ENCODE measurements at regions of chr14 and their contacts with region 1.

Region 1: DNA sequence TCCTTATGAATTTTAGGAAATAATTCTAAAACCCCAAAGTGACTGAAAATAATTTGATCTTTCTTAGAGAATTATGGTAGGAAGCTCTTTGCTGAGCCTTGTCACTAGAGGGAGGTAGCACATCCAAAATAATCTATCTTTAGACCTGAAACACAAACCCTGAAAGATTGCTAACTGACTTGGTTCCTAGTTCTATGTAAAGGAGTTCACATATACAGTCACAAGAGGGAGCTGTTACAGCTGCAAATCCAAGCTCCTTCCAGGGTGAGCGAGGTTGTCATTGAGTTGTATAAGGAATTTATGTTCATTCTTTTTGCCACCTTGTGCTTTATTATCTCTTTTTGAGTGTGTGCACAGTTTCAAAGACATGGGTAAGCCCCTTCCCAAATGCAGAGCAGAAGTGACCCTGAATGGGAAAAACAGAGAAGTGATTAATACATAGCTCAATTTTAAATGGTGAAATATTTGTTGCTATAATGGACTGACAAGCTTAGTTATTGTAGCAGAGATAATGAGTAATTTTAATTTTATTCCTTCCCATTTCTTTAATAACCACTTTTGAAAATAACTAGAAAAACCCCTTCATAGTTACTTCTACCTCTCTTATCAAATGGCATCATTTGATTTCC is 387.9 kb downstream of the DAD1 start:
- H3K4me3 ChIP-seq: no peak overlapping the region
- H3K27ac ChIP-seq: no peak overlapping the region
- H3K4me1 ChIP-seq: no peaks in the 10 kb centered on the region
- CTCF ChIP-seq: no peak

Region 2: DNA sequence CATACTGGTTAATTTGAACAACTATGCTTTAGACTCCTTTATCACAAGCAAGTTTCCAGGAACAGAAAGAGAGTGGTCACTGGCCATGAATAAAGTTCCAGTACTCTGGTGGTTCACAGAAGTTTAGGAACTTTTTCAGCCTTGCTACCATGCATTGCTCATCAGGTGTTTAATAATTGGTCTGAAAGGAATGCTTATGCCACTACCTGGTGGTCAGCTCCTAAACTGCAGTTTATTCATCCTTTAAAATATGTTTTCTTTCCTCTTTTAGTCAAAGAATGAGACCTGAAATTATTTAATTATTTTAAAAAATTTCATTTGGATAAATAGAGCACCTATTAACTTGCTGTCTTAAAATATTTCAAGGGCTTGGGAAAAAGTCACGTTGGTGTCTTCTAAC is 267.4 kb before region 1 on chr14:
- CTCF ChIA-PET with region 1: no interaction called
- POLR2A ChIA-PET with region 1: no interaction called
- H3K4me3 ChIP-seq: no peak overlapping the region
- H3K27ac ChIP-seq: no peak overlapping the region
- H3K4me1 ChIP-seq: no peaks in the 10 kb centered on the region
- CTCF ChIP-seq: no peak

Region 3: DNA sequence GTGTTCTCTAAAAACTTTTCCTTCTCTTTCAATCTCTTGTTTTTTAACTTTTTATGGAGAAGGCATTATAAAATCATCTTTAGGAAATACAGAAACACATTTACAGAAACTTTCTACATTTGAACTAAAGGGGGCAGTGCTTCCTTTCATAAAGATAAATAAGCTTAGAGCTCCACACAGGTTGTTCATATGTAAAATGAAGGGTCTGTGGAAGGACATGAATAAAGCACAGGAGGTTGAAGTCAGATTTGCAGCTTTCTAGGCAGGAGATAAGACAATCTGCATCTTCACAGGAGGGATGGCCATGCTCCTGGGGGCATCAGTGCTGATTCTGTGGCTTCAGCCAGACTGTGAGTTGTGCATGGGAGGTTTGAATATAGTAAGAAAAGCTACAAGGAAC is 38.0 kb before region 1 on chr14:
- CTCF ChIA-PET with region 1: interaction called, 13 read pairs
- POLR2A ChIA-PET with region 1: no interaction called
- H3K4me3 ChIP-seq: no peak overlapping the region
- H3K27ac ChIP-seq: no peak overlapping the region
- H3K4me1 ChIP-seq: no peaks in the 10 kb centered on the region
- CTCF ChIP-seq: no peak

Region 4: DNA sequence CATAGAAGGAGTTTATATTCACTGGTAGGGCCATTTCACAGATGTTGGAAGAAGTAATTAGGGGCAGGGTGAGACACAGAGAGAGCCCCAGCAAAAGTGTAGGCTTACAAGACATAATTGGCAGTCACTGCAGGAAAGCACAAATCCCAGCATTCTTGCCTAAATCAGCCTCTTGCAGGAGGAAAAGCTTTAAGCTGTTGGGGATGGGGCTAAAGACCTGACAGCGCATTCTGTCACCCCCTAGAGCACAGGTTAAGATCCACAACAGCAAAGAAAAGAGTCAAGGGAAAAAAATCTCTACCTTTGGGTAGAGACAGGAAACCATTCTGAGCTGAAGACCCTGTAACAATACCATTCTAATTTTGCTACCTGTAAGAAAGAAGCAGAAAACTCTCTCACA is 21.0 kb before region 1 on chr14:
- CTCF ChIA-PET with region 1: interaction called, 16 read pairs
- POLR2A ChIA-PET with region 1: no interaction called
- H3K4me3 ChIP-seq: no peak overlapping the region
- H3K27ac ChIP-seq: no peak overlapping the region
- H3K4me1 ChIP-seq: no peaks in the 10 kb centered on the region
- CTCF ChIP-seq: no peak

Region 5: DNA sequence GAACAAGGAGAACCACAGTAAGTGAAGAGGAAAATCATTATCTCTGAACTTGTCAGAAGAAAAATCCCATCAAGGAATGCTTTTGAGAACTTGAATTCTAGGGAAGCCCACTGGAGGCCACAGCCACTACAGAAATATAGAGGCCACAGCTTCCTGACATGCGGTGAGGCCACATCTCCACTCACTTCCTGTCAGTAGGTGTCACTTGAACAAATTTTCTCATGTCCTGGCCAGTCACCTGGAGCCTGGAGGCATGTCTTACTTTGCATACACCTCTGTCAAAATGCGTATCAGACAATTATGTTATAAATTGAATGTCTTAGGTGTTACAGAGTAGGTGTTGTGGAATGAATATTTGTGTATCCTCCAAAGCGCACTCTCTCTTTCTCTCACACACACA is 17.6 kb after region 1 on chr14:
- CTCF ChIA-PET with region 1: interaction called, 26 read pairs
- POLR2A ChIA-PET with region 1: no interaction called
- H3K4me3 ChIP-seq: no peak overlapping the region
- H3K27ac ChIP-seq: no peak overlapping the region
- H3K4me1 ChIP-seq: no peaks in the 10 kb centered on the region
- CTCF ChIP-seq: no peak

Region 6: GRCh38 chr14:22255017-22255950 is 54.2 kb after region 1 on chr14:
- CTCF ChIA-PET with region 1: interaction called, 10 read pairs
- POLR2A ChIA-PET with region 1: no interaction called
- H3K4me3 ChIP-seq: no peak overlapping the region
- H3K27ac ChIP-seq: no peak overlapping the region
- H3K4me1 ChIP-seq: no peaks in the 10 kb centered on the region
- CTCF ChIP-seq: no peak

Region 7: GRCh38 chr14:22291406-22291805 is 90.3 kb after region 1 on chr14:
- CTCF ChIA-PET with region 1: no interaction called
- POLR2A ChIA-PET with region 1: no interaction called
- H3K4me3 ChIP-seq: no peak overlapping the region
- H3K27ac ChIP-seq: no peak overlapping the region
- H3K4me1 ChIP-seq: no peaks in the 10 kb centered on the region
- CTCF ChIP-seq: no peak

Measured in HEK293 (cell line).